ENCODE measurements at regions of chr1 and their contacts with region 1.

Region 1: GRCh38 chr1:44571712-44572571 is 102.3 kb downstream of the TMEM53 start:
- DNase-seq: peak in 2 of 3 donors; percentile 50 to 52
- H3K4me3 ChIP-seq: no peak overlapping the region
- H3K27ac ChIP-seq: no peak overlapping the region
- H3K4me1 ChIP-seq: peaks cover 0 to 10% (median 0%) of the 10 kb centered on the region in 4 experiments
- H3K27me3 ChIP-seq: no peaks in the 10 kb centered on the region

Region 2: GRCh38 chr1:44305962-44306422 is 265.9 kb before region 1 on chr1:
- CTCF ChIA-PET with region 1: no interaction called
- POLR2A ChIA-PET with region 1: no interaction called
- DNase-seq: peak; percentile 17 to 82 (median 80)
- H3K4me3 ChIP-seq: peak overlapping the region in 3 of 7 experiments; percentile 4 to 39 (median 9)
- H3K27ac ChIP-seq: peak overlapping the region in 1 of 2 experiments; percentile 44
- H3K4me1 ChIP-seq: peaks cover 8 to 28% (median 24%) of the 10 kb centered on the region in 4 experiments
- H3K27me3 ChIP-seq: no peaks in the 10 kb centered on the region

Region 3: GRCh38 chr1:44557778-44558177 is 14.2 kb before region 1 on chr1:
- CTCF ChIA-PET with region 1: interaction called, 29 read pairs
- POLR2A ChIA-PET with region 1: interaction called, 3 read pairs
- DNase-seq: peak in 2 of 3 donors; percentile 25 to 29
- H3K4me3 ChIP-seq: no peak overlapping the region
- H3K27ac ChIP-seq: no peak overlapping the region
- H3K4me1 ChIP-seq: peaks cover 0 to 7% (median 5%) of the 10 kb centered on the region in 4 experiments
- H3K27me3 ChIP-seq: no peaks in the 10 kb centered on the region

Region 4: GRCh38 chr1:44587796-44588460 is 16.0 kb after region 1 on chr1:
- CTCF ChIA-PET with region 1: interaction called, 52 read pairs
- POLR2A ChIA-PET with region 1: no interaction called
- DNase-seq: peak in 2 of 3 donors; percentile 23 to 45
- H3K4me3 ChIP-seq: no peak overlapping the region
- H3K27ac ChIP-seq: no peak overlapping the region
- H3K4me1 ChIP-seq: peaks cover 0 to 42% (median 27%) of the 10 kb centered on the region in 4 experiments
- H3K27me3 ChIP-seq: no peaks in the 10 kb centered on the region